Panc1 (cell line): ENCODE measurements at regions of chr17 and their contacts with region 1.

Region 1: DNA sequence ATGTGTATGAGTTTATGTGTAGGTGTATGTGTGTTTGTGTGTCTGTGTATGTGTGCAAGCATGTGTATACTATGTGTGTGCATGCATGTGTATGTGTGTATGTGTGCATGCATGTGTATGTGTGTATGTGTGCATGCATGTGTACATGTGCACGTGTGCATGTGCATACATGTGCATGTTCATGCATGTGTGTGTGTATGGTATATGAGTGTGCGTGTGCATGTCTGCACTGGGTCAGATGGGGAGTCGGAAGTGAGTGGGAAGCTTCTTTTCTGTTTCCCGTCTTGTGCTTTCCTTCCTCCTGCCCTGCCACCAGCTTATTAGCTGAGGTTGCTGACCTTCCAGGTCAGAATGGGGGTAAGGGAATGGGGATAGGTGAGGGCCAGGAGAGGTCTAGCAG is 174.7 kb downstream of the MAP2K4 start:
- DNase-seq: no peak
- ATAC-seq: no peak
- H3K4me3 ChIP-seq: no peak overlapping the region
- H3K27ac ChIP-seq: no peak overlapping the region
- H3K4me1 ChIP-seq: no peaks in the 10 kb centered on the region
- H3K27me3 ChIP-seq: no peaks in the 10 kb centered on the region
- CTCF ChIP-seq: no peak

Region 2: GRCh38 chr17:12627177-12627629 is 431.8 kb after region 1 on chr17:
- CTCF ChIA-PET with region 1: no interaction called
- POLR2A ChIA-PET with region 1: interaction called, 15 read pairs
- in situ Hi-C with region 1: no loop called
- intact Hi-C with region 1: no loop called
- DNase-seq: peak; percentile 51
- ATAC-seq: no peak
- H3K4me3 ChIP-seq: no peak overlapping the region
- H3K27ac ChIP-seq: no peak overlapping the region
- H3K4me1 ChIP-seq: no peaks in the 10 kb centered on the region
- H3K27me3 ChIP-seq: no peaks in the 10 kb centered on the region
- CTCF ChIP-seq: no peak